MCF 10A (cell line): ENCODE measurements at regions of chr16 and their contacts with region 1.

Region 1: DNA sequence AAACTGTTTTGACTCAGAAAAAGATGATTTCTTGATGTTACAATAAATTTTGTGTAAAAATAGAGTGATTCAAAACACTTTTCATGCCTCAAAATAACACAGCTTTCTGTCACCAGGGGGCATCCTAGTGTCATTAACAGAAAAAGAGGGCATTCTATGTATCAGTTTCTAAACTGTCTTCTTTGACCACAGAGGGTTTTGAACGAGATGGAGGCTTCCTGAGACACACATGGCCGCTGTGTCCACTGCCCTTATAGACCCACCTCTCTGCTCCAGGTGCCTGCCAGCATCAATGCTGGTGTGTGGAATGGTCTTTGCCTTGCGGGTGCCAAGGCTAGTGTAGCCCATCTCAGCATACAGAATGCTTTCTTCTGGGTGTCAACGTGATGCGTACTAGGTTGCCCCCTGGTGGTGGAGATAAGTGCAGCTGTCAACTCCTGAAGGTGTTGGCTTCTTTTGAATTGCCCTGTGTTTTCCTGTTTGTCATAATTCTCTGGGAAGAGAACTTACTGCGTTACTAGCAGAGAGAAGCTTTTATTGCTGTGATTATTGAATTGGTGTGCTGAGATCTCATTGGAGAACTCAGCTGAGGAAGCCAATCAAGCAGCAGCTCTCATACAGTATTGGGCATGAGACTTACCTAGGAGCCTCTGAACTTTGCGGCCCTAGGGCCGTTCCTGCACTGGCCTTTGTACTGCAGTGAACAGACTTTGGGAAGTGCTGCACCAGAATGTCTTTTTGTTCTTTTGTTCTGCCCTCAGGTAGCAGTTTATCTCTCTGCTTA is 38.6 kb downstream of the USP10 start:
- DNase-seq: peak; percentile 86
- H3K4me3 Mint-ChIP-seq: no peak overlapping the region
- H3K27ac Mint-ChIP-seq: peak overlapping the region; percentile 59
- H3K4me1 Mint-ChIP-seq: peaks cover 41% of the 10 kb centered on the region
- H3K27me3 Mint-ChIP-seq: no peaks in the 10 kb centered on the region
- CTCF ChIP-seq: peak; percentile 75

Region 2: DNA sequence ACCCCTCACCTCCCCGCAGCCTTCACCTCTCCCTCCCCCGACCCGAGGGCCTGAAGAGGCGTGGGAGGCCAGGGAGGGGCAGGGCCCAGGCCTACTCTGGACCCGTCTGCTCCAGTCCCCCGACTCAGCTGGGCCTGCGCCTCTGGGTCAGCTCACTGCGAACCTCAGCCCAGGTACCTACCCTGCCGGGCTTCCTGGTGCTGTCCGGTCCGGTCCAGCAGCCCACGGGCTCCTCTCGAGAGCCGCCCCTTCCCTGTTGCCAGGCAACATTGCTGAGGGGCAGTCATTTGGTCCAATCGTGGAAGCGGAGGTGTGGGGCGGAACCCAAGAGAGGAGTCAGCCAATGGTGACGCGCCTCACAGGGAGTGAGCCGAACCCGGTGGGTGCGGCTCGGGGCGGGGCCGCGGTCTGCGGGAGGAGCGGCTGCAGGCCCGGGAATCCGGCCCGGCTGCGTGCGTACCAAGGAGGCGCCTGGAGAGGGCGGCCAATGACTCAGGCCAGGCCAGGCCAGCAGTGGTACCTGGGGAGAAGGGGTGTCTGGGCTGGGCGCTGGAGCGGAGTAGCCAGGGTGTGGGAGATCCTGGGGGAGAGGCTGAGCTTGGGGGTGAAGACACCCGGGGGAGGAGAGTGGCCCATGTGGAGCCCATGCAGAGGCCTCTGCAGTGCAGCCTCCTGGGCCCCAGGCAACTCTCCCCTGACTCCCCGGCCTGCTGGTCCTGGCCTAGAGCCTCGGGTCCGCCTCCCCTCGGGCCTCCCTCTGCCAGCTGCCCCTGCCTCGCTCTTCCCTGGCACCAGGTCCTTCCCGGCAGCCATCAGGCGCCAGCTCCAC is 233.8 kb before region 1 on chr16 and contains the start of gene MEAK7:
- CTCF ChIA-PET with region 1: interaction called, 23 read pairs
- POLR2A ChIA-PET with region 1: interaction called, 4 read pairs
- intact Hi-C with region 1: no loop called
- DNase-seq: peak; percentile 99
- H3K4me3 Mint-ChIP-seq: peak within 1 kb of the TSS; percentile 84
- H3K27ac Mint-ChIP-seq: peak within 1 kb of the TSS; percentile 88
- H3K4me1 Mint-ChIP-seq: peaks cover 52% of the 10 kb centered on the region
- H3K27me3 Mint-ChIP-seq: no peaks in the 10 kb centered on the region
- CTCF ChIP-seq: no peak
- total RNA-seq, gene MEAK7: 62.3 and 66.8 TPM in 2 replicates

Region 3: DNA sequence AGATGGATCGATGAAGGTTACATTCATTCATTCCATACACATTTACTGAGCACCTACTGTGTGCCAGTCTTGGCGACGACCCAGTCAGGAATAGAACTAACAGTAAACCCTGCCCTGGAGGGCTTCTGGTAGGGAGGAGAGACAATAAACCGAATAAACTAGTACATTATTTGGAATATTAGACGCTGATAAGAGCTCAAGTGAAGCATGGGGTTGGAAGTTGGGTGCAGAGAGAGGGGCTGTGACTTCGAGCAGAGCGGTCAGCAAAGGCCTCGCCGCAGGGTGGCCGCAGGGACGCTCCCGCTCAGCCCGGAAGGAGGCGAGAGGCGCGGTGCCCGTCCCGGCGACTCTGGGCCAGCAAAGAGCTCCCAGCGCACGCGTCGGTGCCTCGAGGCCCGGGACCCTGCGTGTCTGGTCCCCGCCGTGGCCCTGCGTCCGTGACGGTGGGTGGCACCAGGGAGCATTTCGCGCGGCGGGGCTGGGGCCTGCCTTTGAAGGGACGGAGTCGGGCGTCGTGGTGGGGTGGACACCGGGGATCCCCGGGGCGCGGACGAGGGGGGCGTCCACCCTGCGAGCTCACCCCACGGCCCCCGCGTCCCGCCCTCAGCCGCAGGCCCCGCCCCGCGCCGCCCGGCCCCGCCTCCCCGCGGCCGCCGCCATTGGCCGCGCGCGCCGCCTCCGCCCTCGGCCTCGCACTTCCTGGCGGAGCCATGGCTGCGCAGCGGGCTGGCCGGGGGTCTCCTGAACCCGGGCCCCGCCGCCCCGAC is 90.4 kb before region 1 on chr16 and contains the start of gene KLHL36:
- CTCF ChIA-PET with region 1: interaction called, 6 read pairs
- POLR2A ChIA-PET with region 1: interaction called, 10 read pairs
- intact Hi-C with region 1: no loop called
- DNase-seq: peak; percentile 23
- H3K4me3 Mint-ChIP-seq: peak within 1 kb of the TSS; percentile 86
- H3K27ac Mint-ChIP-seq: peak within 1 kb of the TSS; percentile 66
- H3K4me1 Mint-ChIP-seq: peaks cover 24% of the 10 kb centered on the region
- H3K27me3 Mint-ChIP-seq: no peaks in the 10 kb centered on the region
- CTCF ChIP-seq: no peak
- total RNA-seq, gene KLHL36: 38.4 and 41.9 TPM in 2 replicates

Region 4: GRCh38 chr16:84687715-84688114 is 50.7 kb before region 1 on chr16:
- CTCF ChIA-PET with region 1: interaction called, 10 read pairs
- POLR2A ChIA-PET with region 1: interaction called, 3 read pairs
- intact Hi-C with region 1: no loop called
- DNase-seq: peak; percentile 27
- H3K4me3 Mint-ChIP-seq: no peak overlapping the region
- H3K27ac Mint-ChIP-seq: no peak overlapping the region
- H3K4me1 Mint-ChIP-seq: no peaks in the 10 kb centered on the region
- H3K27me3 Mint-ChIP-seq: no peaks in the 10 kb centered on the region
- CTCF ChIP-seq: no peak

Region 5: DNA sequence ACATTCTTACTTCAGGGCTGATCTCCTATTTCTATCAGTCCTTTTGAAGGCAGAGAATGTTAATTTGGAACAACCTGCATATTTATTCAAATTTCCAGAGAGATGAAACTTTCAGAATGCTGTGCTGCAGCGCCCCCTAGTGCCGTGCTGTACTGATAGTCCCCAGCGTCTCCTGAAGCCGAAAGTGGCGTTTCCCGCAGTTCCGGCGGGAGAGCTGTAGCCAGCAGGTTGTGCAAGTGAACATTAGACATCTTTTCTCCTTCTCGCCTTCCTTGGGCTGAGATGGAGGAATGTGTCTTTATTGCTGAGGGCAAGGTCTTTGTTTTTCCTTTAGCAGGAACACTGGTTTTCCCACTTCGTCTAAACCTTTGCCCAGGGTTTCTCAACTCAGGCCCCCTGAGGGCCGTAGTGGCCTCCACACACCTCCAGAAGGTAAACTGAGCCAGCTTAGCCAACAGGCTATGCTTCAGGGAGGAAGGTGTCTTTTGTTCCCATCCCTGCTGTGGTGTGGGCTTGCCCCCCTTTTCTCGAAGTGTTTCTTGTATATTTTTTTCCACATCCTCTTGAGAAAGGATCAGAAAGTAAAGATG is 12.3 kb before region 1 on chr16:
- CTCF ChIA-PET with region 1: interaction called, 71 read pairs
- POLR2A ChIA-PET with region 1: interaction called, 23 read pairs
- intact Hi-C with region 1: loop called (anchors 1 kb)
- DNase-seq: peak; percentile 89
- H3K4me3 Mint-ChIP-seq: peak overlapping the region; percentile 28
- H3K27ac Mint-ChIP-seq: no peak overlapping the region
- H3K4me1 Mint-ChIP-seq: peaks cover 26% of the 10 kb centered on the region
- H3K27me3 Mint-ChIP-seq: no peaks in the 10 kb centered on the region
- CTCF ChIP-seq: peak; percentile 93

Region 6: GRCh38 chr16:84970447-84971127 is 232.1 kb after region 1 on chr16:
- CTCF ChIA-PET with region 1: interaction called, 12 read pairs
- POLR2A ChIA-PET with region 1: no interaction called
- intact Hi-C with region 1: no loop called
- DNase-seq: peak; percentile 76
- H3K4me3 Mint-ChIP-seq: no peak overlapping the region
- H3K27ac Mint-ChIP-seq: no peak overlapping the region
- H3K4me1 Mint-ChIP-seq: no peaks in the 10 kb centered on the region
- H3K27me3 Mint-ChIP-seq: peaks cover 5% of the 10 kb centered on the region
- CTCF ChIP-seq: peak; percentile 90

Region 7: DNA sequence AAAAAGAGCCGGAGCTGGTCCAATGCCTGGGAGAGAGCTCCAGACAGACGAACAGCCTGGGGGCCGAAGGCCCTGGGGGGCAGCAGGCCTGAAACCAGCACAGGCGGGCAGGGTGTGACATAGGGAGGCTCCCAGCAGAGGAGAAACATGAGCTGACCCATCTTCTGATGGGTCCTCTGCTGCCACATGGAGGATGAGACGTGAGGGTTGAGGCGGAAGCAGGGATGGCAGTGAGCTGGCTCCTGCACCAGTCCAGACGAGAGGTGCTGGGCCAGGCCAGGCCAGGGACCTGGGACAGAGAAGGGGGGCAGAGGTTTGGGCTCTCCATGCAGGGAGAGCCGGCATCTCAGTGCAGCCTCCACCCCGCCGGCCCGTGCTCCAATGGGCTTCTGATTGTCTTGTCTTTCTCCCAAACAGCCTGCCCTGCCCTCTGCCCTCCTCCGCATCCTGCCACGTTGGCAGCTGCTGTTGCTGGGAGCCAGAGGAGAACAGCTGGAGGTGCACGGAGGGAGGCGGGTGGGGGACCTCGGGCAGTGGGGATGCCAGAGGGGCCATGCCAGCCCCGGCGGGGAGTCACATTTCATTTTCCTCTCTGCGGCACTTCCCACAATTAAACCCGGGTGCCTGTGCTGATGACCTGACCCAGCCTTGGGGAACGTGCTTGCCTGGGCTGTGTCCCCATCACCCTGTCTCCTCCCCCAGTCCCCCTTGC is 735.6 kb after region 1 on chr16:
- CTCF ChIA-PET with region 1: no interaction called
- POLR2A ChIA-PET with region 1: no interaction called
- intact Hi-C with region 1: no loop called
- DNase-seq: no peak
- H3K4me3 Mint-ChIP-seq: no peak overlapping the region
- H3K27ac Mint-ChIP-seq: no peak overlapping the region
- H3K4me1 Mint-ChIP-seq: peaks cover 6% of the 10 kb centered on the region
- H3K27me3 Mint-ChIP-seq: peaks cover 7% of the 10 kb centered on the region
- CTCF ChIP-seq: no peak